ENCODE measurements at regions of chr4 and their contacts with region 1.

Region 1: GRCh38 chr4:108030332-108030731 is 40.6 kb downstream of the HADH start:
- DNase-seq: peak; percentile 87
- ATAC-seq: peak; percentile 85
- H3K4me3 Mint-ChIP-seq: peak overlapping the region; percentile 38
- H3K27ac Mint-ChIP-seq: peak overlapping the region; percentile 97
- H3K4me1 Mint-ChIP-seq: peaks cover 65% of the 10 kb centered on the region
- H3K27me3 Mint-ChIP-seq: no peaks in the 10 kb centered on the region

Region 2: GRCh38 chr4:107153956-107154355 is 876.4 kb before region 1 on chr4:
- CTCF ChIA-PET with region 1: no interaction called
- POLR2A ChIA-PET with region 1: no interaction called
- intact Hi-C with region 1: no loop called
- DNase-seq: no peak
- ATAC-seq: no peak
- H3K4me3 Mint-ChIP-seq: no peak overlapping the region
- H3K27ac Mint-ChIP-seq: no peak overlapping the region
- H3K4me1 Mint-ChIP-seq: no peaks in the 10 kb centered on the region
- H3K27me3 Mint-ChIP-seq: peaks cover 4% of the 10 kb centered on the region

Region 3: DNA sequence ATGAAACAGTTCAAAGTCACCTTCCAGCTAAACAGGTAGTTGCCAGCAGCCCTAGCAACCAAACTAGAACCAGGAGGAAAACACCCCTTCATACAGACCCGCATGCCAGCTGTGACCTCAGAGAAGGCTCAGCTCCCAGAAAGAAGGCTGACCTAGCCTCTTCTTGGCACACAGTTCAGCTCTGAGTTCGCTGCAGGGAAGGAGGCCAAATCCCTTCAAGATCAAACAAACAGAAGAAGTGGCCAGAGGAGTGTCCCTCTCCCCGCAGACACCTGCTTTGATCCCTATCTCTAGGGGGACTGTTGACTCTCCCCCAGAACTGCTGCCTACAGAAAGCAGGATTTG is 15.3 kb after region 1 on chr4:
- CTCF ChIA-PET with region 1: interaction called, 7 read pairs
- POLR2A ChIA-PET with region 1: interaction called, 5 read pairs
- intact Hi-C with region 1: loop called (anchors 1 to 2 kb)
- DNase-seq: peak; percentile 62
- ATAC-seq: no peak
- H3K4me3 Mint-ChIP-seq: no peak overlapping the region
- H3K27ac Mint-ChIP-seq: peak overlapping the region; percentile 88
- H3K4me1 Mint-ChIP-seq: peaks cover 66% of the 10 kb centered on the region
- H3K27me3 Mint-ChIP-seq: no peaks in the 10 kb centered on the region

Region 4: GRCh38 chr4:108118490-108118889 is 88.2 kb after region 1 on chr4:
- CTCF ChIA-PET with region 1: interaction called, 15 read pairs
- POLR2A ChIA-PET with region 1: interaction called, 4 read pairs
- intact Hi-C with region 1: loop called in 1 of 2 experiments (anchors 1 kb)
- DNase-seq: peak; percentile 53
- ATAC-seq: peak; percentile 18
- H3K4me3 Mint-ChIP-seq: peak overlapping the region; percentile 52
- H3K27ac Mint-ChIP-seq: peak overlapping the region; percentile 87
- H3K4me1 Mint-ChIP-seq: peaks cover 93% of the 10 kb centered on the region
- H3K27me3 Mint-ChIP-seq: no peaks in the 10 kb centered on the region

Region 5: DNA sequence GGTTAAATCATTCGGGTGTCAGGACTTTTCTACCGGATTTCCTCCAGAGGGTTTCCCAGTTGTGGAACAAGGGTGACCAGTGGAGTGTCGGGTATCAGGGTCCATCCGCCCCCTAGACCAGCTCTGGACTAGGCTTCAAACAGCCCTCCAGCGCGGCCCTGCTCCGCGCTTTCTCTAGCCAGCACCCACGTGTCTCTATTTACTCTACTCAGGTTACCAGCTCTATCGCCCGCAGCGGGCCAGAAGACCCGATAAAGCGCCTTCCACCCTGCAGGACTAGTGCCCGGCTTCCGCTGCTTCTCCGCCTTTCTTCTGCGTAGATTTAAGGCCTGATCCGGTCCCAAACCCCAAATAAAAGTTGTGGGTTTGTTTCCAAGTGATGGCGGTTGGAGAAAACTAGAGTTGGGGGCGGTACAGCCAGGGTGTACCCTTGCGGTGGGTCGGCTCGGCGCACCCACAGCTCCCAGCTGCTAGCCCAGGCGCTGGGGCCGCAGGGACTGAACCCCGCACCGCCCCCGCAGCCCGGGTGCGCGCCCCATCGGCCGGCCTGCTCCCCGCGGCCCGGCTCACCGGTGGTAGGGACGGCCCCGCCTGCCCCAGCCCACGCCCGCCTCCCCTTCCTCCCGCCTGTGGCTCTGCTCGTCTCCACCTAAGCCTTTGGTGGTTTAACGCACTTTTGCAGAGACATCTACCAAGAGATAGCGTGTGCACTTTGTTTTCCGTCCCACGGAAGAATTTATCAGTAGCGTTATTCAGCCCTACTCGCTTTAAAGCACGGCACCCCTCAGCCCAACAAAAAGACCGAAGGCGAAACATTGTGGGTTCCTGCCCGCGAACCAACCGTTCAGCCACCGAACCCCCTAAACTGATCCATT is 136.3 kb after region 1 on chr4:
- CTCF ChIA-PET with region 1: interaction called, 21 read pairs
- POLR2A ChIA-PET with region 1: interaction called, 4 read pairs
- intact Hi-C with region 1: loop called (anchors 1 to 2 kb)
- DNase-seq: peak; percentile 86
- ATAC-seq: peak; percentile 35
- H3K4me3 Mint-ChIP-seq: peak overlapping the region; percentile 85
- H3K27ac Mint-ChIP-seq: peak overlapping the region; percentile 96
- H3K4me1 Mint-ChIP-seq: peaks cover 39% of the 10 kb centered on the region
- H3K27me3 Mint-ChIP-seq: peaks cover 12% of the 10 kb centered on the region

Region 6: DNA sequence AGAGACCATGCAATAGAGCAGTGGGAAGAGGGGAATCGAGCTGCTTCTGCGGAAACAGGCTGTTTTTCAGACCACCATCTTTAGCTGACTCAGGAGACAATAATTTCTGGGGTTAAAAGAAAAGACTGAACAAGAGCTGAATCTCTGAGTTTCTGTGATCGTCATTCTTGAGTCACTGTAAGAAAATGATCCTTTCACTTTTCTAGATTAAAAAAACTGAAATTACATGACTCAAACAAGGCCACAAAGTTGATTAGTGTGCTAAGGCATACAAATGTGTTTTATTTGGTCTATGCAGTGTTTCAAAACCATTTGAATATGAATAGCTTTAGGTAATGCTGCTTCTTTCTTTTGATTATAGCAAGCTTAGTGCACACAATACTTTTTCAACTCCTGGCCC is 395.7 kb after region 1 on chr4:
- CTCF ChIA-PET with region 1: interaction called, 5 read pairs
- POLR2A ChIA-PET with region 1: interaction called, 3 read pairs
- intact Hi-C with region 1: loop called in 1 of 2 experiments (anchors 1 kb)
- DNase-seq: peak; percentile 13
- ATAC-seq: peak; percentile 86
- H3K4me3 Mint-ChIP-seq: no peak overlapping the region
- H3K27ac Mint-ChIP-seq: peak overlapping the region; percentile 38
- H3K4me1 Mint-ChIP-seq: peaks cover 33% of the 10 kb centered on the region
- H3K27me3 Mint-ChIP-seq: peaks cover 3% of the 10 kb centered on the region

Region 7: DNA sequence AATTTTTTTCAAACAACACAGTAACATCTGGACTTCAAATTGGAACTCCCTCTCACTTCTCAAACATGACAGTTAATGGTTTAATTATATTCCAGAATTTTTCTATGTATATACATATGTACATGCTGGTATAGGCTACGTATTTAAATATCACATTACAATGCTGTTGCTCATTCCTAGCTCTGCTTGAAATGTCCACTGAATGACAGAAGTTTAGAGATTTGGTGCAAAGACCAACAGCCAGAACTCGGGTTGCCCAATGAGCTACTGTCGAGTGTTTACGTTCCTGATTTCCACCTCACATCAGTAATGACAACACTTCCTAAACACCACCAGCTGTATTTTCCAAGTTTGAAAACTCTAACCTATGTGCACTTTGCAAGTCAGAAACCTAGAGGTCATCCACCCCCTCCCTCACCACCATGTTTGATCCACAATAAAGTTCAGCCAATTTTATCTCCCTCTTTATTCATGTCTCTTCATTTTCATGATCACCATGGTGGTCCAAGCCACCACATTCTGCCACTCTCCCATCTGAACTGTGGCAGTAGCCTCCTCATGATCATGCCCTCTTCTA is 540.7 kb after region 1 on chr4:
- CTCF ChIA-PET with region 1: interaction called, 38 read pairs
- POLR2A ChIA-PET with region 1: no interaction called
- intact Hi-C with region 1: loop called (anchors 1 kb)
- DNase-seq: no peak
- ATAC-seq: no peak
- H3K4me3 Mint-ChIP-seq: no peak overlapping the region
- H3K27ac Mint-ChIP-seq: no peak overlapping the region
- H3K4me1 Mint-ChIP-seq: peaks cover 23% of the 10 kb centered on the region
- H3K27me3 Mint-ChIP-seq: no peaks in the 10 kb centered on the region

Measured in activated CD4-positive, alpha-beta T cell treated with anti-CD3 and anti-CD28 coated beads for 36 hours (primary cell).